Activated naive CD4-positive, alpha-beta T cell treated with anti-CD3 and anti-CD28 coated beads for 36 hours (primary cell): ENCODE measurements at regions of chr4 and their contacts with region 1.

Region 1: GRCh38 chr4:155353923-155354540 is 22.7 kb downstream of the MAP9 start:
- DNase-seq: peak; percentile 60
- H3K4me3 Mint-ChIP-seq: no peak overlapping the region
- H3K27ac Mint-ChIP-seq: no peak overlapping the region
- H3K4me1 Mint-ChIP-seq: no peaks in the 10 kb centered on the region
- H3K27me3 Mint-ChIP-seq: no peaks in the 10 kb centered on the region

Region 2: GRCh38 chr4:154634058-154634457 is 720.0 kb before region 1 on chr4:
- CTCF ChIA-PET with region 1: no interaction called
- intact Hi-C with region 1: loop called (anchors 5 kb)
- DNase-seq: no peak
- H3K4me3 Mint-ChIP-seq: no peak overlapping the region
- H3K27ac Mint-ChIP-seq: no peak overlapping the region
- H3K4me1 Mint-ChIP-seq: no peaks in the 10 kb centered on the region
- H3K27me3 Mint-ChIP-seq: peaks cover 20% of the 10 kb centered on the region

Region 3: GRCh38 chr4:154807042-154807630 is 546.9 kb before region 1 on chr4:
- CTCF ChIA-PET with region 1: no interaction called
- intact Hi-C with region 1: loop called (anchors 1 kb)
- DNase-seq: no peak
- H3K4me3 Mint-ChIP-seq: no peak overlapping the region
- H3K27ac Mint-ChIP-seq: no peak overlapping the region
- H3K4me1 Mint-ChIP-seq: no peaks in the 10 kb centered on the region
- H3K27me3 Mint-ChIP-seq: peaks cover 5% of the 10 kb centered on the region

Region 4: GRCh38 chr4:154982187-154983047 is 371.6 kb before region 1 on chr4:
- CTCF ChIA-PET with region 1: no interaction called
- intact Hi-C with region 1: loop called (anchors 1 kb)
- DNase-seq: peak; percentile 61
- H3K4me3 Mint-ChIP-seq: no peak overlapping the region
- H3K27ac Mint-ChIP-seq: no peak overlapping the region
- H3K4me1 Mint-ChIP-seq: no peaks in the 10 kb centered on the region
- H3K27me3 Mint-ChIP-seq: peaks cover 7% of the 10 kb centered on the region

Region 5: GRCh38 chr4:155336242-155336641 is 17.8 kb before region 1 on chr4:
- CTCF ChIA-PET with region 1: no interaction called
- intact Hi-C with region 1: no loop called
- DNase-seq: no peak
- H3K4me3 Mint-ChIP-seq: no peak overlapping the region
- H3K27ac Mint-ChIP-seq: no peak overlapping the region
- H3K4me1 Mint-ChIP-seq: no peaks in the 10 kb centered on the region
- H3K27me3 Mint-ChIP-seq: peaks cover 12% of the 10 kb centered on the region

Region 6: DNA sequence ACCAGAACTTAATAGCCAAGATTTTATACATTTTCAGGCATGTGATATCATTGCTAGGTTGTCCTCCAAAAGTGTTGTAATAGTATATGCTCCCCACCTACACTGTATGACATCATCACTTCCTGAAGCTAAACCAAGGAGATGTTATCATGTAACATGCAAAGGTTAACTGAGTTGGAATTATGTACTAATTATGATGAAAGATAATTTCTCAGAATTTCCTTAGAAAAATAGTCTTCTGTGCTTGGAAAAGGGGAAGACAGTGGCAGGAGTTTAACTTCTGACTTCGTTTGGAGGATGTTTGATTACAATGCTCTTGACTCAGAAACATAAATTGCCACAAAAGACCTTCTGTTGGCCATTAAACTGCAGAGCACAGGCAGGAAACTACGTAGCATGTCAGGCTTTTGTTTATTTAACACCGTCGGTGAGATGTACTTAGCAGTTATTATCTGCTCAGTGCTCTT is 229.0 kb after region 1 on chr4:
- CTCF ChIA-PET with region 1: no interaction called
- intact Hi-C with region 1: no loop called
- DNase-seq: no peak
- H3K4me3 Mint-ChIP-seq: no peak overlapping the region
- H3K27ac Mint-ChIP-seq: no peak overlapping the region
- H3K4me1 Mint-ChIP-seq: peaks cover 8% of the 10 kb centered on the region
- H3K27me3 Mint-ChIP-seq: no peaks in the 10 kb centered on the region